ENCODE measurements at regions of chr5 and their contacts with region 1.

Region 1: GRCh38 chr5:176959051-176959450 is 47.5 kb downstream of the UIMC1 start:
- DNase-seq: no peak
- H3K4me3 Mint-ChIP-seq: no peak overlapping the region
- H3K27ac Mint-ChIP-seq: no peak overlapping the region
- H3K4me1 Mint-ChIP-seq: no peaks in the 10 kb centered on the region
- H3K27me3 Mint-ChIP-seq: no peaks in the 10 kb centered on the region

Region 2: DNA sequence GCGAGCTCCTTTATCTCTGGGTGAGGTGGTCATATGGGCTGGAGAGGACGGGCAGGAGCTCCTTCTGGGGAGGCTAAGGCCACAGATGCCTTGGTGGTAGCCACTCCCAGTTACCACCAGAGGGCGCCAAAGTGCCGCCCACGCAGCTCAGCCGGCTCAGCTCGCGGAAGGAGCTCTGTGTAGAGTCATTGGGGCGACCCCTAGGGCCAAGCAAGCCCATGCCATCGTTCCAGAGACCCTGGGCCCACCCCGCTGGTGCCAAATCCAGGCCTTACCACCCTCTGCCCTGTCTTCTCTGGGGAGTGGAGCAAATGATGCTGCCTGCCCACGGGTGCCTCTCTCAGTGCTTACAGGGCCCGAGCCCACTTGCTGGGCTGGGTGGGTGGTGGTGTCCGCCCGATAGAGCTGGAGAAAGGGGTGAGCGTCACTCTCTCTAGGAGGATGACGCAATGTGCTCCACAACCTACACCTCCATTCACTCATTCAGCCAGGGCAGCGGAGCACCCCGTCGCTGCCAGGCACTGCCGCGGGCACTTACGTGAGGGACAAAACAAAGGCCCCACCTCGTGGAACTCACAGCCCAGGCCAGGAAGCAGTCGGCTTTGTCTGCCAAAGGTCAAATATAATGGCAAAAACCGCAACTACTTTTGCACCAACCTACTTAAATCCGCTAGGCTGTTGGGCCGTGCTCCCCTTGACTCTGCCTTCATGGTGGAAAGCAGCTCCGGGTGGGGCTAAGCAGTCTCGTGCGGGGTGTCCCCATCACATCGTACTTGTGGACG is 298.0 kb before region 1 on chr5:
- intact Hi-C with region 1: loop called (anchors 2 kb)
- DNase-seq: peak; percentile 66
- H3K4me3 Mint-ChIP-seq: no peak overlapping the region
- H3K27ac Mint-ChIP-seq: no peak overlapping the region
- H3K4me1 Mint-ChIP-seq: peaks cover 19% of the 10 kb centered on the region
- H3K27me3 Mint-ChIP-seq: peaks cover 15% of the 10 kb centered on the region

Region 3: DNA sequence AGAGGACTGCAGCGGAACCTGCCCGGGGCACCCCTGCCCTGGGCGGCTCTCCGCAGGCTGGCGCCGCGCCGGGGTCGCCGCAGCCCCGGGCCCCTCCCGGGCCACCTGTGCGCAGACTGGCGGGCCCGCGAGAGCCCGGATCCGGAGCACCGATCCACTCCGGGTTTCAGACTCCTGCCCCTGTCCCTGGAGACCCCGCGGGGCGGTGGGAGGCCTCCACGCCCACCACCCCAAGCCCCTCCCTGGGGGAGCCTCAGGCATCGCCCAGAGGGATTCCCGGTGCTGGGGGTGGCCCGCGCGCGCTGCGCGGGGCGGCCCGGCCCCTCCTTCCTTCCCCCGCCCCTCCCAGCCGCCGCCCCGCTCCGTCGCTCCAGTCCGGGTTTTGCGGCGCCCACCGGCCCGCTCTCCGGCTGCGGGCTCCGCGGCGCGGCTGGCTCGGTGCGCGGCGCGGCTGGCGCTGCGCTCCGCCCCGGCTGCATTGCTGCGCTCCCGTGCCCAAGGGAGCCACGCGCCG is 148.9 kb before region 1 on chr5 and contains the start of gene UNC5A:
- intact Hi-C with region 1: loop called (anchors 5 kb)
- DNase-seq: peak; percentile 43
- H3K4me3 Mint-ChIP-seq: peak within 1 kb of the TSS; percentile 74
- H3K27ac Mint-ChIP-seq: no peak within 1 kb of the TSS
- H3K4me1 Mint-ChIP-seq: peaks cover 5% of the 10 kb centered on the region
- H3K27me3 Mint-ChIP-seq: peaks cover 55% of the 10 kb centered on the region
- total RNA-seq, gene UNC5A: not detected in 2 replicates

Region 4: DNA sequence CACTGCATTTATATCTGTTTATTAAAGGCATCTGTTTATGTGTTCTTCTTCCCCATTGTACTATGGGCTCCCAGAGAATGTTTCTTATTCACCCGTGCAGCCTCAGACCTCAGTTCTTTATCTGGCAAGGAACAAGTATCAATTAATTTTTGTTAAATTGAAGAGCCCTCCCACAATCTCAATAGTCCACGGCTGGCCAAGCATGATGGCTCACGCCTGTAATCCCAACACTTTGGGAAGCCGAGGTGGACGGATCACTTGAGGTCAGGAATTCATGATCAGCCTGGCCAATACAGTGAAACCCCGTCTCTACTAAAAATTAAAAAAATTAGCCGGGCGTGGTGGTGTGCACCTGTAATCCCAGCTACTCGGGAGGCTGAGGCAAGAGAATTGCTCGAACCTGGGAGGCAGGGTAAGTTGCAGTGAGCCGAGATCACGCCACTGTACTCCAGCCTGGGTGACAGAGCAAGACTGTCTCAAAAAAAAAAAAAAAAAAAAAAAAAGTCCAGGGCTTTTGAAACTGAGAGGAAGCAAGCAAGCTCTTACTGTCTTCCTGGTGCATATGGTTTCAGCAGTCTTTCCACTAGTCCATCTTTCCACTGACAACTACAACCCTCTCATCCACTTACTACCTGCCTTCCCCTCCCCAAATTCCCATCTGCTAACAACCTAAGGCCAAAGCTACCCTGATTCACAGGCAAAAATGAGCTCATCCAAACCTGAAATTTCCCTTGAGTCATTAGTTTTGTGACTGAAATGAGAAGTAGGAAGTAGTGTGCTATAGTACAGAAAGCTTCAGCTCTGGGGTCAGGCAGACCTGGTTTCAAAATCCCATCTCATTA is 57.6 kb before region 1 on chr5:
- intact Hi-C with region 1: loop called (anchors 5 kb)
- DNase-seq: no peak
- H3K4me3 Mint-ChIP-seq: no peak overlapping the region
- H3K27ac Mint-ChIP-seq: peak overlapping the region; percentile 81
- H3K4me1 Mint-ChIP-seq: peaks cover 17% of the 10 kb centered on the region
- H3K27me3 Mint-ChIP-seq: no peaks in the 10 kb centered on the region

Region 5: GRCh38 chr5:176916337-176916736 is 42.7 kb before region 1 on chr5:
- intact Hi-C with region 1: no loop called
- DNase-seq: no peak
- H3K4me3 Mint-ChIP-seq: no peak overlapping the region
- H3K27ac Mint-ChIP-seq: no peak overlapping the region
- H3K4me1 Mint-ChIP-seq: peaks cover 29% of the 10 kb centered on the region
- H3K27me3 Mint-ChIP-seq: no peaks in the 10 kb centered on the region

Region 6: GRCh38 chr5:176934309-176934930 is 24.6 kb before region 1 on chr5:
- intact Hi-C with region 1: no loop called
- DNase-seq: no peak
- H3K4me3 Mint-ChIP-seq: no peak overlapping the region
- H3K27ac Mint-ChIP-seq: peak overlapping the region; percentile 46
- H3K4me1 Mint-ChIP-seq: peaks cover 18% of the 10 kb centered on the region
- H3K27me3 Mint-ChIP-seq: no peaks in the 10 kb centered on the region